A673 (cell line): ENCODE measurements at regions of chr6 and their contacts with region 1.

Region 1: GRCh38 chr6:15378866-15379265 is 133.0 kb downstream of the JARID2 start:
- DNase-seq: no peak
- H3K4me3 ChIP-seq: no peak overlapping the region
- H3K27ac ChIP-seq: no peak overlapping the region
- H3K4me1 ChIP-seq: peaks cover 7% of the 10 kb centered on the region
- H3K27me3 ChIP-seq: no peaks in the 10 kb centered on the region
- CTCF ChIP-seq: no peak

Region 2: DNA sequence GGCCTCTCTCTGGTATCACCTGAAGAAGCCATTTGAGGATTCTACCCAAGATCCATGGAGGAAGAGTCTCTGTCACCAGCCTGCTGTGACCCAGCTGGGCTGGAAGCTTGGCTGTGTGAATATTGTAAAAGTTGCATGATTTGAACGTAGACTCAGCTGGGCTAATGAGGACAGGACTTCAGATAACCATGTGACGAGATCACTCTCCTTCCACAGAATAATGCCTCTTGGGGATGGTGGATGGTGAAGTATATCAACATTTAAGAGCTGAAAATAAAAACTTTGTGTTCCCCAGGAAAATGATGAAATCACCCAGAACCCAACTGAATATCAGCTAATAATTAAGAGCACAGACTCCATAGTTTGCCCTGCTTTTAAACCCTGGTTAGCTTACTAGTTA is 833.4 kb before region 1 on chr6:
- CTCF ChIA-PET with region 1: no interaction called
- POLR2A ChIA-PET with region 1: interaction called, 17 read pairs
- intact Hi-C with region 1: no loop called
- DNase-seq: no peak
- H3K4me3 ChIP-seq: no peak overlapping the region
- H3K27ac ChIP-seq: no peak overlapping the region
- H3K4me1 ChIP-seq: peaks cover 12% of the 10 kb centered on the region
- H3K27me3 ChIP-seq: no peaks in the 10 kb centered on the region
- CTCF ChIP-seq: no peak

Region 3: GRCh38 chr6:15413466-15414234 is 34.8 kb after region 1 on chr6:
- CTCF ChIA-PET with region 1: no interaction called
- POLR2A ChIA-PET with region 1: interaction called, 12 read pairs
- intact Hi-C with region 1: no loop called
- DNase-seq: peak; percentile 25
- H3K4me3 ChIP-seq: no peak overlapping the region
- H3K27ac ChIP-seq: no peak overlapping the region
- H3K4me1 ChIP-seq: peaks cover 13% of the 10 kb centered on the region
- H3K27me3 ChIP-seq: no peaks in the 10 kb centered on the region
- CTCF ChIP-seq: no peak

Region 4: DNA sequence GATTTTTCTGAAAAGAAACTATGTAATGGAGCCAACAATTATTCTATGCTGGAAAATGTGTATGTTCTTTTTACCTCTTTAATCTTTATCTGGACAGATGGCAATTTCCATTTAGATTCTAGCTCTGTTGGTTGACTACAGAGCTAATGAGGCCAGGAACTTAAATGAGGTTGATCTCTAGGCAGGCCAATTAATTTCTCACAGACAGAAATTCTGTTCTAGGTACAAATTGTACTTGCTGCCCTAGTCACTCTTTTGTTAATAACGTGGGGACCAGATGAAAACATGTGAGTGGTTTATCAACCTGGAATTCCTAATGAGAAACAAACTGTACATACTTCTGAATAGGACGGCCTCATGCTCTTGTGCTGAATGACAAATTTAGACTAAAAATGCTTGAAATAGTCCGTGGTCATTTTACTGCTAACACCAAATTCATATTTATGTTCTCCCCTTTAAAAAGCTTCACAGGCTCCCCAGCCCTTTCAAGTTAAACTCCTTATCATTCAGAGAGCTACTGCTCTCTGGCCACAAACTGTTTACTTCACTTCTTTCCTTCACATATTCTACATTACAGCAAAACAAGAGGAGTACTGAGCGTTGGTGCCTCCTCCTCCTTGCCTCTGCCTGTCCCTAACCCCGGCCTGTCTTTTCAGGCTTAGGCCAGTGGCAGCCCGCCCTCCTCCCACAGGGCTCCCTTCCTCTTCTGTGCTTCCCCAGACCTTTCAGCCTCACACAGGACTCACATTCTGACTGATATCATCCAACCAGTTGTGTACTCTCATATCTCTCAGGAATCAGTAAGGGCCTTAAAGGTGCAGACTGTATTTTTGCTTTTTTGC is 242.6 kb after region 1 on chr6:
- CTCF ChIA-PET with region 1: no interaction called
- POLR2A ChIA-PET with region 1: no interaction called
- intact Hi-C with region 1: no loop called
- DNase-seq: peak; percentile 37
- H3K4me3 ChIP-seq: no peak overlapping the region
- H3K27ac ChIP-seq: peak overlapping the region; percentile 83
- H3K4me1 ChIP-seq: peaks cover 80% of the 10 kb centered on the region
- H3K27me3 ChIP-seq: no peaks in the 10 kb centered on the region
- CTCF ChIP-seq: no peak